ENCODE measurements at regions of chr5 and their contacts with region 1.

Region 1: DNA sequence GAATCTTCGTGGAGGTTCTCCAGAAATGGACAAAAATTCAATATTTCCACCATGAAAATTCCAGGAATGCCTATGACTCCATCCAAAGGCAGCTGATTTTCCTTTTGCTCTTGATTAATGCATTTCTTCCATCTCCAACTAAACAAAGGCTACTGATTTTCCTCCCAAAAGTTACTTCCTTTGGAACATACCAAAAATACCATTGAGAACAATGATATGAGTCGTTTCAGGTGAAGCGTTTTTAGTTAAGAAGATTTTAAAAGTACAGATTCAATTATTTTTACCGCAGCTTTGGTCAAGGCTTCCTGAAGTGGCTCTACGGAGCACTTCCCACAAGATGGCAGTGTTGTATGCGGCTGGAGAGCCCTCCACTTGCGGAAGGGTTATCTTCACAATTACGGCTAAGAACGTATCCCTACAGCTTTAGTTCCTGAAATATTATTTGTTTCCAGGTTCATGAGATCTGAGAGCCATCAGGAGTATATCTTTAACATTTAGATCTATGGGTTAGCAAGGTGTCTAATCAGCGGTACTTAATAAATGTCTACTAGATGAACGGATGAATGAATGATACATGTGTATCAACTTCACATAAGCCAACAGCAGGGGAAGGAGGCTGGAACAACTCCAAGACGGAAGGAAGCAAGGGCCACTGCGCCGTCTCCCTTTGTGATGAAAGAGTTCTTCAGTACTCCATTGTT is 35.9 kb upstream of the ARSB start:
- DNase-seq: peak; percentile 18 to 61 (median 40)
- ATAC-seq: peak; percentile 91
- H3K4me3 ChIP-seq: no peak overlapping the region
- H3K27ac ChIP-seq: no peak overlapping the region
- H3K4me1 ChIP-seq: no peaks in the 10 kb centered on the region; a peak in 1 of 5 replicates
- H3K27me3 ChIP-seq: no peaks in the 10 kb centered on the region; a peak in 2 of 5 replicates
- CTCF ChIP-seq: peak; percentile 80 to 88 (median 86)
- EP300 ChIP-seq: no peak
- POLR2A ChIP-seq: no peak
- RAD21 ChIP-seq: peak; percentile 85 to 89

Region 2: GRCh38 chr5:79008362-79008761 is 12.6 kb before region 1 on chr5:
- CTCF ChIA-PET with region 1: no interaction called
- POLR2A ChIA-PET with region 1: no interaction called
- in situ Hi-C with region 1: no loop called
- intact Hi-C with region 1: no loop called
- DNase-seq: peak in 2 of 4 experiments; percentile 12 to 14
- ATAC-seq: peak; percentile 66
- H3K4me3 ChIP-seq: no peak overlapping the region
- H3K27ac ChIP-seq: no peak overlapping the region
- H3K4me1 ChIP-seq: no peaks in the 10 kb centered on the region
- H3K27me3 ChIP-seq: peaks cover 7 to 8% of the 10 kb centered on the region in 2 experiments; a peak in 3 of 5 replicates
- CTCF ChIP-seq: peak in 1 of 3 experiments; percentile 21; a peak in 2 of 6 replicates
- EP300 ChIP-seq: no peak
- POLR2A ChIP-seq: no peak
- RAD21 ChIP-seq: 0 out of 4 replicates have a peak, but pooled peaks of 1 of the 2 experiments have one; percentile 22

Region 3: GRCh38 chr5:79109527-79110492 is 88.8 kb after region 1 on chr5:
- CTCF ChIA-PET with region 1: interaction called, 19 read pairs
- POLR2A ChIA-PET with region 1: interaction called, 4 read pairs
- in situ Hi-C with region 1: no loop called
- intact Hi-C with region 1: loop called (anchors 1 kb)
- DNase-seq: peak; percentile 44 to 52 (median 48)
- ATAC-seq: peak; percentile 88
- H3K4me3 ChIP-seq: no peak overlapping the region
- H3K27ac ChIP-seq: no peak overlapping the region
- H3K4me1 ChIP-seq: peaks cover 0 to 11% of the 10 kb centered on the region in 2 experiments; a peak in 3 of 5 replicates
- H3K27me3 ChIP-seq: peaks cover 24 to 34% of the 10 kb centered on the region in 2 experiments
- CTCF ChIP-seq: peak; percentile 70 to 82 (median 75)
- EP300 ChIP-seq: no peak
- POLR2A ChIP-seq: no peak
- RAD21 ChIP-seq: peak; percentile 68 to 79

Region 4: DNA sequence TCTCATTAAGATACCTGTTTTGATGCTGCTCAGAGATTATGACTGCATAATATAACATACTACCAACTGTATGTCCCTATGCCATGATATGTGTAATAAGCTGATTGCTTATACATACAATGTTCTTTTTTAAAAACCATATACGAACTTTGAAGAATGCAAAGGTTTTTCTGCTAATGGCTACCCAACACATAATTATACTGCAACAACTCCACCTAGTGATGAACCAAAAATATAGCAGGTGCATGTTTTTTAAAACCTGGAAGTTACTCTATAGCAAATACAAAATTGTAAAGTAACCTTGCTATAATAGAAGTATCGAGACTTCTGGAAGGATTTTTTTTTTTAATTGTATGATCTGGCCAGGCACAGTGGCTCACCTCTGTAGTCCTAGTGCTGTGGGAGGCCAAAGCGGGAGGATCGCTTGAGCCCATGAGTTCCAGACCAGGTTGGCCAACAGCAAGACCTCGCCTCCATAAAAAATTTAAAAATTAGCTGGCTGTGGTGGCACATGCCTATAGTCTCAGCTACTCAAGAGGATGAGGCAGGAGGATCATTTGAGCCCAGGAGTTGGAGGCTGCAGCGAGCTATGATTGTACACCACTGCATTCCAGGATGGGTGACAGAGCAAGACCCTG is 443.8 kb after region 1 on chr5:
- CTCF ChIA-PET with region 1: interaction called, 6 read pairs
- POLR2A ChIA-PET with region 1: no interaction called
- in situ Hi-C with region 1: loop called (anchors 10 kb)
- intact Hi-C with region 1: loop called (anchors 1 kb)
- DNase-seq: peak in 3 of 4 experiments; percentile 12 to 37 (median 16)
- ATAC-seq: peak; percentile 82
- H3K4me3 ChIP-seq: no peak overlapping the region
- H3K27ac ChIP-seq: no peak overlapping the region
- H3K4me1 ChIP-seq: no peaks in the 10 kb centered on the region
- H3K27me3 ChIP-seq: no peaks in the 10 kb centered on the region
- CTCF ChIP-seq: peak; percentile 30 to 79 (median 49); a peak in 4 of 6 replicates
- EP300 ChIP-seq: no peak
- POLR2A ChIP-seq: no peak
- RAD21 ChIP-seq: peak; percentile 81

Region 5: GRCh38 chr5:79857714-79858409 is 836.9 kb after region 1 on chr5:
- CTCF ChIA-PET with region 1: interaction called, 3 read pairs
- POLR2A ChIA-PET with region 1: no interaction called
- in situ Hi-C with region 1: loop called (anchors 25 kb)
- intact Hi-C with region 1: loop called (anchors 10 kb)
- DNase-seq: peak; percentile 47 to 82 (median 67)
- ATAC-seq: peak; percentile 80
- H3K4me3 ChIP-seq: no peak overlapping the region
- H3K27ac ChIP-seq: no peak overlapping the region
- H3K4me1 ChIP-seq: peaks cover 0 to 3% of the 10 kb centered on the region in 2 experiments; a peak in 1 of 5 replicates
- H3K27me3 ChIP-seq: peaks cover 9 to 30% of the 10 kb centered on the region in 2 experiments; a peak in 4 of 5 replicates
- CTCF ChIP-seq: peak; percentile 84 to 91 (median 90)
- EP300 ChIP-seq: no peak
- POLR2A ChIP-seq: no peak
- RAD21 ChIP-seq: peak; percentile 80 to 92

Region 6: DNA sequence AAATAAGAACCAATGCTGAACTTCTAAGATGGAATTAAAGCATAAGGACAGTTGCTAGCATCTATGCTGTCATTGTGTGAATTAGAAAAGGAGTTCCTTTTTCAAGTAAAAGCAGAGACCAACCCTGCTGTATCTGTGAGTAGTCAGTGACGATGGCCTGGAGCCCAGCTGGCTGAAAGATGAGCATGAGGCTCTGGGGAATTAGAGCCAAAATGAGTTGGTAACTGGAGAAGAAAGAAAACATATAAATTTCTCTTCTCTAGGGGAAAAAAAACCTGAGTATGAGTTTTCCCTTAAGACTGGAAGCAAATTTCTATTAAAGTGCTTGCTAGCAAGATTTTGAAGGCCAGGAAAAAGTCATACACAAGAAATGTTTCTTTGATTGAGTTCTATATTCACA is 1297.2 kb after region 1 on chr5:
- CTCF ChIA-PET with region 1: no interaction called
- POLR2A ChIA-PET with region 1: no interaction called
- in situ Hi-C with region 1: loop called (anchors 25 kb)
- intact Hi-C with region 1: no loop called
- DNase-seq: no peak
- ATAC-seq: no peak
- H3K4me3 ChIP-seq: no peak overlapping the region
- H3K27ac ChIP-seq: no peak overlapping the region
- H3K4me1 ChIP-seq: no peaks in the 10 kb centered on the region; a peak in 1 of 5 replicates
- H3K27me3 ChIP-seq: peaks cover 8 to 9% of the 10 kb centered on the region in 2 experiments; a peak in 4 of 5 replicates
- CTCF ChIP-seq: no peak
- EP300 ChIP-seq: no peak
- POLR2A ChIP-seq: no peak
- RAD21 ChIP-seq: no peak